GM12878 (cell line): ENCODE measurements at regions of chr17 and their contacts with region 1.

Region 1: DNA sequence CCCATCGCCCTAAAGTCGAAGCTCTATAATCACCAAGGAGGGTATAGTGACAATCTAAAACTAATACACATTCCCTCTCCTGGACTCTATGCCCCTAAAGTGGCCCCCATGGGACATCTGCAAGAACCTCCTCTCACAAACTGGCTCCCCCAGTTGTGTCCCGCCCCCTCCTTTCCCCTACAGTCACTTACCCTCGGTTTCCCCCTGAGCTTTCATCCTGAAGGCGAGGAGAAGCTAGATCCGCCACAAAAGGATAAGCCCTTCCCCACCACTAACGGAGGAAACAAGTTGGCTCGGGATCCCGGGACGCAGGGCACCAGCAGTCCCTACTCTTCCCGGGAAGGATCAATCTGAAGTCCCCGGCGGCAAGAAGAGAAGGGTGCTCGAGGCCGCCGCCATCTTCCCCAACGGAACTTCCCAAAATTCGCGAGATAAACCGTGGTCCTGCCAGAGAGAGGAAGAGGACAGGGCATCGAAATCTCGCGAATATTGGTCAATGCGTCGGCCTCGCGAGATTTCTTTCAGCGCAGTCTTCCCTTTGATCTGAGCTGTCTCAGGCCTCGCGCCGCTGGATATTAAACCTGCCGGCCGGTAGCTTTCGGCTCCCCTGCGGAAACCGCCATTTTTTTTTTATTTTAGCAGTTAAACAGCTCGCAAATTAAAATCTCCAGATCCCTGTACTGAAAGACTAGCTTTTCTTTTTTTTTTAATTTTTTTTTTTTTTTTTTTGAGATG is at the start of gene MED1:
- DNase-seq: peak; percentile 96
- ATAC-seq: peak; percentile 97
- H3K4me3 ChIP-seq: peak within 1 kb of the TSS; percentile 98
- H3K27ac ChIP-seq: peak within 1 kb of the TSS; percentile 88
- H3K4me1 ChIP-seq: no peaks in the 10 kb centered on the region
- H3K27me3 ChIP-seq: no peaks in the 10 kb centered on the region
- CTCF ChIP-seq: no peak
- EP300 ChIP-seq: no peak
- POLR2A ChIP-seq: peak; percentile 90
- RAD21 ChIP-seq: no peak
- polyA plus RNA-seq, gene MED1: 8.7 to 10.8 TPM

Region 2: DNA sequence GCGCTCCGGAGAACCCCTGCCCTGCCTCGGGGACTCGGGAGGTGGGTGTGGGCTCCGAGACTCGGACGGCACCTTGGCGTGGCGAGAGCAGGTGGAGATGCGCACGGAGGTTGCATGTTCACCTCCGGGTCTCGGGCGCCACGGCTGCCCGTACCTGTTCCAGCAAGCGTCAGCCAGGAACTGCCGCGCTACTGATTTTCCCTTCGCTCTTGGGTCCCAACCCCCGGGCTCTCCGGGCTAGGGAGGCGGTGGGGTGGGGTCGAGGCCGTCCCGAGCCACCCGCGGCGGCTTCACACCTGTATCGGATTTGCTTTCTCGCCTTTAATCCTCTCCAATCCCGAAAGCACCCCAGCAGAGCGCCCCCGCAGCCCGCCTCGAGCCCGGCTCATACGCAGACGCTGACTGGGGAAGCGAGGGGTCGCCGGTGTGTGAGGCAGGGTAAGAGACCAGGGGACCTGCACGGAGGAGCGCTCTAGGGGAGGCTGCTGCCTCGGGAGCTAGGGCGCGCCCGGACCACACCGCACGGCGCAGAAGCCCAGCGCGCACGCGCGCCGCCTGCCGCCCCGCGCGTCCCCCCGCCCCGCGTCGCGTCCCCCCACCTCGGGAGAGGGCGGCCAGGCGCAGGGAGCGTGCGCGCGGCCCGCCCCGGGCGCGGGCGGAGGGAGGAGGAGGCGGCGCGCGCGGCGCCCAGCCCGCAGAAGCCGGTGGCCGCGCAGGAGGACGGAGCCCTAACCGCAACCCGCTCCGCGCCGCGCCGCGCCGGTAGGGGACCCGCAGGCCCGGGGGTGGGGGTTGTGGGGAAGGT is 1961.6 kb before region 1 on chr17 and contains the start of gene DUSP14:
- CTCF ChIA-PET with region 1: no interaction called
- POLR2A ChIA-PET with region 1: interaction called, 12 read pairs
- RAD21 ChIA-PET with region 1: no interaction called
- SMC1A ChIA-PET with region 1: no interaction called
- in situ Hi-C with region 1: no loop called
- intact Hi-C with region 1: no loop called
- DNase-seq: no peak
- ATAC-seq: peak; percentile 76
- H3K4me3 ChIP-seq: peak within 1 kb of the TSS; percentile 92
- H3K27ac ChIP-seq: peak within 1 kb of the TSS; percentile 53
- H3K4me1 ChIP-seq: peaks cover 17% of the 10 kb centered on the region
- H3K27me3 ChIP-seq: no peaks in the 10 kb centered on the region
- CTCF ChIP-seq: peak in 1 of 3 experiments; percentile 13; a peak in 1 of 6 replicates
- EP300 ChIP-seq: no peak
- POLR2A ChIP-seq: peak; percentile 88
- RAD21 ChIP-seq: no peak
- polyA plus RNA-seq, gene DUSP14: 21.1 to 36.5 TPM

Region 3: GRCh38 chr17:39199820-39200069 is 251.3 kb before region 1 on chr17:
- CTCF ChIA-PET with region 1: no interaction called
- POLR2A ChIA-PET with region 1: interaction called, 10 read pairs
- RAD21 ChIA-PET with region 1: interaction called, 3 read pairs
- SMC1A ChIA-PET with region 1: no interaction called
- in situ Hi-C with region 1: no loop called
- intact Hi-C with region 1: no loop called
- DNase-seq: peak; percentile 81
- ATAC-seq: peak; percentile 65
- H3K4me3 ChIP-seq: peak overlapping the region; percentile 95
- H3K27ac ChIP-seq: peak overlapping the region; percentile 100
- H3K4me1 ChIP-seq: peaks cover 27% of the 10 kb centered on the region
- H3K27me3 ChIP-seq: no peaks in the 10 kb centered on the region
- CTCF ChIP-seq: no peak
- EP300 ChIP-seq: no peak
- POLR2A ChIP-seq: no peak
- RAD21 ChIP-seq: no peak

Region 4: GRCh38 chr17:39261286-39261685 is 189.7 kb before region 1 on chr17:
- CTCF ChIA-PET with region 1: no interaction called
- POLR2A ChIA-PET with region 1: no interaction called
- RAD21 ChIA-PET with region 1: no interaction called
- SMC1A ChIA-PET with region 1: no interaction called
- in situ Hi-C with region 1: no loop called
- intact Hi-C with region 1: no loop called
- DNase-seq: no peak
- ATAC-seq: peak; percentile 56
- H3K4me3 ChIP-seq: no peak overlapping the region
- H3K27ac ChIP-seq: no peak overlapping the region
- H3K4me1 ChIP-seq: no peaks in the 10 kb centered on the region
- H3K27me3 ChIP-seq: no peaks in the 10 kb centered on the region
- CTCF ChIP-seq: peak; percentile 6 to 54 (median 47); a peak in 4 of 6 replicates
- EP300 ChIP-seq: no peak
- POLR2A ChIP-seq: no peak
- RAD21 ChIP-seq: no peak

Region 5: DNA sequence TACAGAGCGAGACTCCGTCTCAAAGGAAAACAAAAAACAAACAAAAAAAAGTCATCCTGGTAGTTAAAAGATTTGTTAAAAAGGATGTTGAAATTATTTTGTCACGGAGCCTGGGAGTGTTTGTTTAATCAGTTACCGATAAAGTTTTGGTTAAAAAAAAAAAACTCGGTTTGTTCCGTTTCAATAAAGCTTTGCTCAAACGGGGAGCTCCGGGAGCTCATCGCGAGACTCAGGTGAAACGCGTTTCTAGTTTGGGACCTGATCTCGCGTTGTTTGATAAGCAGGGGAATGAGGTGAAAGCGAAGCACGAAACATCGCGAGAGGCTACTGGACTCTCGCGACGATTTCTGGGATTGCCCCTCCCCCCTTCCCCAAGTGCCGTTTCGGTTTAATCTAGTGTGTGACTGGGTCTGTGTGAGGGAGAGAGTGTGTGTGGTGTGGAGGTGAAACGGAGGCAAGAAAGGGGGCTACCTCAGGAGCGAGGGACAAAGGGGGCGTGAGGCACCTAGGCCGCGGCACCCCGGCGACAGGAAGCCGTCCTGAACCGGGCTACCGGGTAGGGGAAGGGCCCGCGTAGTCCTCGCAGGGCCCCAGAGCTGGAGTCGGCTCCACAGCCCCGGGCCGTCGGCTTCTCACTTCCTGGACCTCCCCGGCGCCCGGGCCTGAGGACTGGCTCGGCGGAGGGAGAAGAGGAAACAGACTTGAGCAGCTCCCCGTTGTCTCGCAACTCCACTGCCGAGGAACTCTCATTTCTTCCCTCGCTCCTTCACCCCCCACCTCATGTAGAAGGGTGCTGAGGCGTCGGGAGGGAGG is 10.3 kb after region 1 on chr17 and contains the start of gene CDK12:
- CTCF ChIA-PET with region 1: interaction called, 11 read pairs
- POLR2A ChIA-PET with region 1: interaction called, 73 read pairs
- RAD21 ChIA-PET with region 1: interaction called, 38 read pairs
- SMC1A ChIA-PET with region 1: interaction called, 36 read pairs
- in situ Hi-C with region 1: no loop called
- intact Hi-C with region 1: loop called (anchors 1 kb)
- DNase-seq: peak; percentile 98
- ATAC-seq: peak; percentile 87
- H3K4me3 ChIP-seq: peak within 1 kb of the TSS; percentile 99
- H3K27ac ChIP-seq: peak within 1 kb of the TSS; percentile 91
- H3K4me1 ChIP-seq: no peaks in the 10 kb centered on the region
- H3K27me3 ChIP-seq: no peaks in the 10 kb centered on the region
- CTCF ChIP-seq: no peak; a peak in 1 of 6 replicates
- EP300 ChIP-seq: no peak
- POLR2A ChIP-seq: peak; percentile 96
- RAD21 ChIP-seq: no peak
- polyA plus RNA-seq, gene CDK12: 3.2 to 3.4 TPM

Region 6: GRCh38 chr17:39485555-39485954 is 34.5 kb after region 1 on chr17:
- CTCF ChIA-PET with region 1: no interaction called
- POLR2A ChIA-PET with region 1: interaction called, 10 read pairs
- RAD21 ChIA-PET with region 1: interaction called, 3 read pairs
- SMC1A ChIA-PET with region 1: interaction called, 6 read pairs
- in situ Hi-C with region 1: no loop called
- intact Hi-C with region 1: no loop called
- DNase-seq: no peak
- ATAC-seq: no peak
- H3K4me3 ChIP-seq: no peak overlapping the region
- H3K27ac ChIP-seq: peak overlapping the region; percentile 20; the same call in 1 of the 2 replicates
- H3K4me1 ChIP-seq: peaks cover 44% of the 10 kb centered on the region
- H3K27me3 ChIP-seq: no peaks in the 10 kb centered on the region
- CTCF ChIP-seq: no peak
- EP300 ChIP-seq: no peak
- POLR2A ChIP-seq: no peak
- RAD21 ChIP-seq: no peak